GM12878 (cell line): ENCODE measurements at regions of chr6 and their contacts with region 1.

Region 1: GRCh38 chr6:28586962-28587745 is 61.5 kb downstream of the GPX5 start:
- DNase-seq: no peak
- ATAC-seq: peak; percentile 90
- H3K4me3 ChIP-seq: peak overlapping the region; percentile 73
- H3K27ac ChIP-seq: peak overlapping the region; percentile 1; the same call in 1 of the 2 replicates
- H3K4me1 ChIP-seq: no peaks in the 10 kb centered on the region
- H3K27me3 ChIP-seq: no peaks in the 10 kb centered on the region
- CTCF ChIP-seq: no peak
- EP300 ChIP-seq: no peak
- POLR2A ChIP-seq: peak; percentile 86
- RAD21 ChIP-seq: no peak

Region 2: GRCh38 chr6:28542440-28543296 is 44.5 kb before region 1 on chr6:
- CTCF ChIA-PET with region 1: no interaction called
- POLR2A ChIA-PET with region 1: no interaction called
- RAD21 ChIA-PET with region 1: interaction called, 3 read pairs
- SMC1A ChIA-PET with region 1: interaction called, 4 read pairs
- in situ Hi-C with region 1: no loop called
- intact Hi-C with region 1: loop called (anchors 2 kb)
- DNase-seq: peak; percentile 64
- ATAC-seq: peak; percentile 90
- H3K4me3 ChIP-seq: peak overlapping the region; percentile 60; the same call in 1 of the 2 replicates
- H3K27ac ChIP-seq: no peak overlapping the region
- H3K4me1 ChIP-seq: peaks cover 2% of the 10 kb centered on the region; the same call in 1 of the 2 replicates
- H3K27me3 ChIP-seq: no peaks in the 10 kb centered on the region
- CTCF ChIP-seq: peak; percentile 51 to 75 (median 72); a peak in 5 of 6 replicates
- EP300 ChIP-seq: no peak
- POLR2A ChIP-seq: no peak
- RAD21 ChIP-seq: peak; percentile 45